ENCODE measurements at regions of chr1 and their contacts with region 1.

Region 1: DNA sequence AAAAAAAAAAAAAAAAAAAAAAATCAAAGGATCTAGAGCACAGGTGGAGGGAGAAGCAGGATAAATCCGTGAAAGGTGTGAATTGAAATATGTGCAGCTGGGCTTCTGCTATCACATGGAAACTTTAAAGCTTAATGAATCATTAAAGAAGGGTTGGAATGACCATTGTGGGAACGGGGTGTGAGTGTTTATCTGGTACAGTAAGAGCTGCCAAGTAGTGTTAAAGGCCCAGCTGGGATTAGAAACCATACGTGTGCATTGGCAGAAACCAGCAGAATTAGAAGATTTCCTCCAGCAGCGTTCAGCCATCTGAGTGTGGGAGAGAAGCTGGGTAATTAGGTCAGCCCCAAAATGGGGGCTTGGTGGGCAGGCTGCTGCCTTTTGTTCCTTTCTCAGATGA is 13.5 kb downstream of the FALEC start:
- DNase-seq: no peak
- ATAC-seq: no peak
- H3K4me3 ChIP-seq: peak overlapping the region in 2 of 3 experiments; percentile 3 to 21; a peak in 1 of 6 replicates
- H3K27ac ChIP-seq: no peak overlapping the region
- H3K4me1 ChIP-seq: peaks cover 52% of the 10 kb centered on the region
- H3K27me3 ChIP-seq: no peaks in the 10 kb centered on the region
- CTCF ChIP-seq: no peak
- EP300 ChIP-seq: no peak
- POLR2A ChIP-seq: no peak
- RAD21 ChIP-seq: no peak

Region 2: GRCh38 chr1:150021191-150021694 is 507.8 kb before region 1 on chr1:
- CTCF ChIA-PET with region 1: no interaction called
- POLR2A ChIA-PET with region 1: no interaction called
- in situ Hi-C with region 1: no loop called
- intact Hi-C with region 1: no loop called
- DNase-seq: peak; percentile 95
- ATAC-seq: peak; percentile 98
- H3K4me3 ChIP-seq: peak overlapping the region in 1 of 3 experiments; percentile 12; a peak in 1 of 6 replicates
- H3K27ac ChIP-seq: peak overlapping the region; percentile 61
- H3K4me1 ChIP-seq: peaks cover 36% of the 10 kb centered on the region
- H3K27me3 ChIP-seq: no peaks in the 10 kb centered on the region
- CTCF ChIP-seq: peak; percentile 18; the same call in 1 of the 2 replicates
- EP300 ChIP-seq: peak in 1 of 2 experiments; percentile 54; a peak in 2 of 4 replicates
- POLR2A ChIP-seq: peak in 1 of 2 experiments; percentile 56; a peak in 1 of 4 replicates
- RAD21 ChIP-seq: no peak

Region 3: GRCh38 chr1:150464422-150464826 is 64.6 kb before region 1 on chr1:
- CTCF ChIA-PET with region 1: interaction called, 18 read pairs
- POLR2A ChIA-PET with region 1: interaction called, 5 read pairs
- in situ Hi-C with region 1: no loop called
- intact Hi-C with region 1: loop called (anchors 1 kb)
- DNase-seq: peak; percentile 51
- ATAC-seq: peak; percentile 67
- H3K4me3 ChIP-seq: no peak overlapping the region
- H3K27ac ChIP-seq: no peak overlapping the region
- H3K4me1 ChIP-seq: peaks cover 22% of the 10 kb centered on the region
- H3K27me3 ChIP-seq: no peaks in the 10 kb centered on the region
- CTCF ChIP-seq: peak; percentile 89
- EP300 ChIP-seq: no peak
- POLR2A ChIP-seq: no peak
- RAD21 ChIP-seq: peak; percentile 82

Region 4: GRCh38 chr1:150486964-150487762 is 41.9 kb before region 1 on chr1 and contains the start of gene TARS2:
- CTCF ChIA-PET with region 1: no interaction called
- POLR2A ChIA-PET with region 1: interaction called, 5 read pairs
- in situ Hi-C with region 1: loop called (anchors 5 kb)
- intact Hi-C with region 1: loop called (anchors 1 kb)
- DNase-seq: peak; percentile 97
- ATAC-seq: peak; percentile 99
- H3K4me3 ChIP-seq: peak within 1 kb of the TSS; percentile 78 to 80 (median 80)
- H3K27ac ChIP-seq: peak within 1 kb of the TSS; percentile 65
- H3K4me1 ChIP-seq: peaks cover 24% of the 10 kb centered on the region
- H3K27me3 ChIP-seq: no peaks in the 10 kb centered on the region
- CTCF ChIP-seq: peak; percentile 31
- EP300 ChIP-seq: peak in 1 of 2 experiments; percentile 29; a peak in 1 of 4 replicates
- POLR2A ChIP-seq: peak; percentile 78 to 83
- RAD21 ChIP-seq: no peak
- total RNA-seq, gene TARS2: 18.9 and 22.8 TPM in 2 replicates

Region 5: GRCh38 chr1:150515328-150516048 is 13.5 kb before region 1 on chr1 and contains the start of gene FALEC:
- CTCF ChIA-PET with region 1: no interaction called
- POLR2A ChIA-PET with region 1: interaction called, 78 read pairs
- in situ Hi-C with region 1: no loop called
- intact Hi-C with region 1: loop called (anchors 1 kb)
- DNase-seq: peak; percentile 93
- ATAC-seq: peak; percentile 95
- H3K4me3 ChIP-seq: peak within 1 kb of the TSS; percentile 73 to 84 (median 80)
- H3K27ac ChIP-seq: peak within 1 kb of the TSS; percentile 82
- H3K4me1 ChIP-seq: peaks cover 32% of the 10 kb centered on the region
- H3K27me3 ChIP-seq: no peaks in the 10 kb centered on the region; a peak in 1 of 5 replicates
- CTCF ChIP-seq: no peak; the same call in 1 of the 2 replicates
- EP300 ChIP-seq: peak in 1 of 2 experiments; percentile 14; a peak in 1 of 4 replicates
- POLR2A ChIP-seq: peak; percentile 60 to 82
- RAD21 ChIP-seq: peak; percentile 13; the same call in 1 of the 2 replicates
- total RNA-seq, gene FALEC: 0.71 TPM in 1 of 2 replicates, not detected in the other

Region 6: GRCh38 chr1:150543500-150544141 is 14.6 kb after region 1 on chr1:
- CTCF ChIA-PET with region 1: no interaction called
- POLR2A ChIA-PET with region 1: interaction called, 44 read pairs
- in situ Hi-C with region 1: no loop called
- intact Hi-C with region 1: no loop called
- DNase-seq: peak; percentile 74
- ATAC-seq: peak; percentile 81
- H3K4me3 ChIP-seq: peak overlapping the region in 1 of 3 experiments; percentile 46; a peak in 2 of 6 replicates
- H3K27ac ChIP-seq: no peak overlapping the region
- H3K4me1 ChIP-seq: peaks cover 39% of the 10 kb centered on the region
- H3K27me3 ChIP-seq: no peaks in the 10 kb centered on the region; a peak in 1 of 5 replicates
- CTCF ChIP-seq: no peak
- EP300 ChIP-seq: no peak
- POLR2A ChIP-seq: no peak
- RAD21 ChIP-seq: no peak

Region 7: DNA sequence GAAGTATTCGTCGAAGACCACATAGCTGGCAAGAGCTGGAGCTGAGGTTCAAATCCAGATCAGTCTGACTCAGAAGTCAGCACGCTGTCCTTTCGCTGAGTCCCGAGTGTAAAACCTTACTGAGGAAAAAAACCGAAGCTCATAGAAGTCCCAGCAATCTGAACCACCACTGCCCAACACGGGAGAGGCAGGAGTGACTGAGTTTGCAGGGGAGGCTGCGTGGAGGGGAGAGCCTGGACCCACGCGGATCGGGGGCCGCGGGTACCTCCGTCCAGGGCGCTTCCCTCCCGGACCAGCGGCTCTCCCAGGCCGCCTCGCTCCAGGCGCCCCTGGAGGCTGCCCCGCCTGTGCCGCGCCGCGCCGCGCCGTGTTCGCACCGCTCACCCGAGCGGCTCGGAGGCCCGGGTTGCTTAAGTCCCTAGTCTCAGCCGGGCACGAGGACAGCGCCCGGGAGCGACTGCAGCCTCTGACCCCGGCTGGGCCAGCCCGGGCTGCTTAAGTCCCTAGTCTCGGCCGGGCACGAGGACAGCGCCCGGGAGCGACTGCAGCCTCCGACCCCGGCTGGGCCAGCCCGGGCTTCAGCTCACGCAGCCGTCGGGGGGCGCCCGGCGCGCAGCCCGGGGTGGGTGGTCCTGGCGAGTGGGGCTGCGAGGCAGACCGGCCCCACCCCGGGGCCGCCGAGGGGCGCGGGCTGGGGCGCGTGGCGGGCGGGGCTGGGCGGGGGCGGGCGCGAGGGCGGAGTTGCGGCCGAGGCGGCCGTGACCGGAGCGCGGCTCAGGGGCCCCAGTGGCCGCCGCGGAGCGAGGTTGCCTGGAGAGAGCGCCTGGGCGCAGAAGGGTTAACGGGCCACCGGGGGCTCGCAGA is 19.8 kb after region 1 on chr1 and contains the start of gene ADAMTSL4:
- CTCF ChIA-PET with region 1: no interaction called
- POLR2A ChIA-PET with region 1: interaction called, 44 read pairs
- in situ Hi-C with region 1: no loop called
- intact Hi-C with region 1: loop called (anchors 1 kb)
- DNase-seq: no peak
- ATAC-seq: peak; percentile 67
- H3K4me3 ChIP-seq: peak within 1 kb of the TSS; percentile 62 to 83 (median 63)
- H3K27ac ChIP-seq: peak within 1 kb of the TSS; percentile 57
- H3K4me1 ChIP-seq: peaks cover 61% of the 10 kb centered on the region
- H3K27me3 ChIP-seq: no peaks in the 10 kb centered on the region; a peak in 1 of 5 replicates
- CTCF ChIP-seq: peak; percentile 30; the same call in 1 of the 2 replicates
- EP300 ChIP-seq: no peak
- POLR2A ChIP-seq: peak in 1 of 2 experiments; percentile 45; a peak in 1 of 4 replicates
- RAD21 ChIP-seq: 0 out of 2 replicates have a peak, but pooled peaks have one; percentile 37
- total RNA-seq, gene ADAMTSL4: 1.9 and 3.9 TPM in 2 replicates

Region 8: GRCh38 chr1:150596095-150596892 is 67.3 kb after region 1 on chr1:
- CTCF ChIA-PET with region 1: no interaction called
- POLR2A ChIA-PET with region 1: no interaction called
- in situ Hi-C with region 1: no loop called
- intact Hi-C with region 1: no loop called
- DNase-seq: no peak
- ATAC-seq: no peak
- H3K4me3 ChIP-seq: no peak overlapping the region
- H3K27ac ChIP-seq: no peak overlapping the region
- H3K4me1 ChIP-seq: peaks cover 46% of the 10 kb centered on the region
- H3K27me3 ChIP-seq: no peaks in the 10 kb centered on the region
- CTCF ChIP-seq: no peak
- EP300 ChIP-seq: no peak
- POLR2A ChIP-seq: no peak
- RAD21 ChIP-seq: no peak